Upper lobe of right lung (tissue), 1 donor: ENCODE measurements at regions of chr5 and their contacts with region 1.

Region 1: GRCh38 chr5:81751009-81751835 is at the start of gene SSBP2:
- DNase-seq: peak; percentile 99
- ATAC-seq: peak; percentile 94
- H3K4me3 ChIP-seq: peak within 1 kb of the TSS; percentile 73
- H3K27ac ChIP-seq: peak within 1 kb of the TSS; percentile 99
- H3K4me1 ChIP-seq: peaks cover 26% of the 10 kb centered on the region
- H3K27me3 ChIP-seq: no peaks in the 10 kb centered on the region
- CTCF ChIP-seq: no peak
- total RNA-seq, gene SSBP2: 43.8 TPM

Region 2: GRCh38 chr5:81696418-81697397 is 54.5 kb before region 1 on chr5:
- intact Hi-C with region 1: no loop called
- DNase-seq: no peak
- ATAC-seq: peak; percentile 60
- H3K4me3 ChIP-seq: no peak overlapping the region
- H3K27ac ChIP-seq: no peak overlapping the region
- H3K4me1 ChIP-seq: no peaks in the 10 kb centered on the region
- H3K27me3 ChIP-seq: no peaks in the 10 kb centered on the region
- CTCF ChIP-seq: no peak

Region 3: GRCh38 chr5:82165740-82166530 is 414.7 kb after region 1 on chr5:
- intact Hi-C with region 1: loop called (anchors 5 kb)
- DNase-seq: no peak
- ATAC-seq: peak; percentile 100
- H3K4me3 ChIP-seq: no peak overlapping the region
- H3K27ac ChIP-seq: peak overlapping the region; percentile 33
- H3K4me1 ChIP-seq: peaks cover 14% of the 10 kb centered on the region
- H3K27me3 ChIP-seq: no peaks in the 10 kb centered on the region
- CTCF ChIP-seq: peak; percentile 78